GM10248 (cell line): ENCODE measurements at regions of chr6 and their contacts with region 1.

Region 1: DNA sequence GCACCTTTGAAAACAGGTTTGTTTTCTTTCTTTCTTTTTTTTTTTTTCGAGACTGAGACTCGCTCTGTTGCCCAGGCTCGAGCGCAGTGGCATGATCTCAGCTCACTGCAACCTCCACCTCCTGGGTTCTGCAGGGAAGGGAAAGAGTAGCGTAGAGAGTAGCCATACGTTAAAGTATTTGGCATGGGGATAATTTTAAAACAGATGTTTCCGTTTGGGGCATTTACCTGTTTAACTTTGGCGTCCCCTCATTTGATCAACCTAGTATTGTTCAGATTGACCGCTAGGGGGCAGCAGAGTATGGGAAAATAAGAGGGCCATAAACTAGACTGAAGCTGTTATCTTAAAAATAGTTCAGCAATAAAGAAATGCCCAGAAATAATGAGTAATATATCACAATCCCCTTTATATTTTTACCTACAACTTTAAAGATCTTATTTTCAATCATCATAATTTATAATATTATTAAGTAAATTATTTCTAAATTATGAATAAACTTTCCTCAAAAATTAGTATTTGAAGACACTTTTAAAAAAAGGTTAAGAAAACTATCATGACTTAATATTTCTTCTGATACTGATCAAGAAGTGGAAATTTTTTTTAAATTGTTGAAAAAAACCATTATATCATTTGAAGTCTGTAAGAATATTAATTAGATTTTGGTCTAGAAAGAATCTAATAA is 7.6 kb upstream of the TAAR9 start:
- DNase-seq: peak; percentile 34
- CTCF ChIP-seq: peak; percentile 61

Region 2: DNA sequence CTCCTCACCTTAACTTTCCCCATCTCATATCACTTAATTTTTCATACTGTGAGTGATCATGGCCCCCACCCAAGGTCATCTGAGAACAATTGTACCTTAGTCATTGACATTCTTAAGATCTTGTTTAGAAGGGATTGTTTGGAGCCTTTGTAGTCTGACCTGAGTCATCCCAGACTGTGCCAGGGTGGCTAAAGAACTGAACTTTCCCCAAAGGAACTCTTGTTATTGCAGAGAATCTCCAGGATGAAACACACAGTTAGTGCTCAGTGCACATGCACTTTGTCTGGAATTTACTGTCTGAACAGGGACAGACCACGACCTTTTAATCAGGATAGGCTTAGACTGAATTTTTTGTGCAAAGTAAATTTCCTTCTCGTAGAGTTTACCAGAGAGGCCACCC is 466.7 kb before region 1 on chr6:
- CTCF ChIA-PET with region 1: no interaction called
- POLR2A ChIA-PET with region 1: no interaction called
- DNase-seq: no peak
- CTCF ChIP-seq: no peak

Region 3: GRCh38 chr6:132424827-132425575 is 105.4 kb before region 1 on chr6:
- CTCF ChIA-PET with region 1: no interaction called
- POLR2A ChIA-PET with region 1: no interaction called
- DNase-seq: no peak
- CTCF ChIP-seq: no peak

Region 4: GRCh38 chr6:132512638-132513632 is 17.5 kb before region 1 on chr6 and contains the start of gene STX7:
- CTCF ChIA-PET with region 1: interaction called, 24 read pairs
- POLR2A ChIA-PET with region 1: no interaction called
- DNase-seq: peak; percentile 90
- CTCF ChIP-seq: no peak

Region 5: GRCh38 chr6:132569170-132569569 is 38.7 kb after region 1 on chr6:
- CTCF ChIA-PET with region 1: no interaction called
- POLR2A ChIA-PET with region 1: no interaction called
- DNase-seq: no peak
- CTCF ChIP-seq: no peak

Region 6: GRCh38 chr6:132751306-132751705 is 220.9 kb after region 1 on chr6:
- CTCF ChIA-PET with region 1: no interaction called
- POLR2A ChIA-PET with region 1: no interaction called
- DNase-seq: no peak
- CTCF ChIP-seq: no peak